Colonic mucosa (tissue), 4 donors: ENCODE measurements at regions of chr4 and their contacts with region 1.

Region 1: GRCh38 chr4:92387459-92388069 is 83.8 kb downstream of the GRID2 start:
- DNase-seq: no peak
- H3K4me3 ChIP-seq: no peak overlapping the region
- H3K27ac ChIP-seq: no peak overlapping the region
- H3K4me1 ChIP-seq: no peaks in the 10 kb centered on the region
- H3K27me3 ChIP-seq: no peaks in the 10 kb centered on the region
- CTCF ChIP-seq: peak; percentile 39

Region 2: GRCh38 chr4:90419124-90419711 is 1968.3 kb before region 1 on chr4:
- intact Hi-C with region 1: loop called (anchors 10 kb)
- DNase-seq: no peak
- H3K4me3 ChIP-seq: no peak overlapping the region
- H3K27ac ChIP-seq: no peak overlapping the region
- H3K4me1 ChIP-seq: no peaks in the 10 kb centered on the region
- H3K27me3 ChIP-seq: no peaks in the 10 kb centered on the region
- CTCF ChIP-seq: peak; percentile 43

Region 3: DNA sequence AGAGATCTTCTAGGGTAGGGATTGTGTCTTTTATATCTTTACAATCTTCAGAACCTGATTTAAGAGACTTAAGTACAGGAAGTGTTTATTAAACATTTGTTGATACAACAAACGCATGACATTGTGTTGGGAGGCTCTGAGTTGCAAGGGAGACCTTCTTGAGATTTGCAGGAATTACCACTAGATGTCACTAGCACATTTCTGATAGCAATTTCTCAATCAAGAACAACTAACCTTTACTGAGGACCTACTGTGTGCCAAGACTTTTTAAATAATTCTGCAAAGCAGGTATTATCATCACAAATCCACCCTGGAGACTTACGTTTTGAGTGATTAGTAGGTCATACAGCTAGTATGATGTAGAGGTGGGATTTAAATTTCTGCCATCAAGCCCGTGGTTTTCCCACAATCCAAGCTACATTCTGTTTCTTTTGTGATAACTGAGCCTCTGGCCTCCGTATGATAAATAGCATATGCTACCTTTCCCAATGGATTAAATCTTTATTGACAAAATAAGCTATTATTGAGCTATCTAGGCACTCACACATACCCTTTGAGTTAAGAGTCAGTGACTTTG is 1274.3 kb before region 1 on chr4:
- intact Hi-C with region 1: loop called (anchors 5 kb)
- DNase-seq: no peak
- H3K4me3 ChIP-seq: no peak overlapping the region
- H3K27ac ChIP-seq: no peak overlapping the region
- H3K4me1 ChIP-seq: no peaks in the 10 kb centered on the region
- H3K27me3 ChIP-seq: no peaks in the 10 kb centered on the region
- CTCF ChIP-seq: peak; percentile 37

Region 4: DNA sequence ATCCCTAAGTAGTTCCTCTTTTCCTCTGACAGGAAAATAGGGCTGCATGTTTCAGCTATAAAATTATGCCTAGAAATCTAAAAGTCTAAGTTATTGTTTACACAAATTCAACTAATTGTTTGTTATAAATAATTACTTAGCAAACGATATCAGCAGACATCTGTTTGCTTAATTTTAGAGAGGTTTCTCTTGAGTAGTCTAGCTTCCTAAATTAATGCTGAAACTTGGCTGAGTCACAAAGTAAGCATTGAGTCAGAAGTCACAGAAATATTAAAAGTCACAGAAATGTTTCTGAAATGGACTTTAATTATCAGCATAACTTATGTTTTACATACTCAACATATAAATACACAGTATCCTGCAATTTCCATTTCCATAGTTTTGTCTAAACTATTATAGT is 1216.4 kb before region 1 on chr4:
- intact Hi-C with region 1: no loop called
- DNase-seq: no peak
- H3K4me3 ChIP-seq: no peak overlapping the region
- H3K27ac ChIP-seq: no peak overlapping the region
- H3K4me1 ChIP-seq: no peaks in the 10 kb centered on the region
- H3K27me3 ChIP-seq: no peaks in the 10 kb centered on the region
- CTCF ChIP-seq: no peak

Region 5: GRCh38 chr4:92952426-92952825 is 564.9 kb after region 1 on chr4:
- intact Hi-C with region 1: no loop called
- DNase-seq: no peak
- H3K4me3 ChIP-seq: no peak overlapping the region
- H3K27ac ChIP-seq: no peak overlapping the region
- H3K4me1 ChIP-seq: no peaks in the 10 kb centered on the region
- H3K27me3 ChIP-seq: no peaks in the 10 kb centered on the region
- CTCF ChIP-seq: no peak